ENCODE measurements at regions of chr7 and their contacts with region 1.

Region 1: GRCh38 chr7:66557608-66558143 is 71.0 kb upstream of the KCTD7 start:
- DNase-seq: peak; percentile 22
- H3K4me3 ChIP-seq: no peak overlapping the region
- H3K27ac ChIP-seq: no peak overlapping the region
- H3K4me1 ChIP-seq: no peaks in the 10 kb centered on the region
- H3K27me3 ChIP-seq: no peaks in the 10 kb centered on the region
- CTCF ChIP-seq: peak; percentile 88 to 94

Region 2: DNA sequence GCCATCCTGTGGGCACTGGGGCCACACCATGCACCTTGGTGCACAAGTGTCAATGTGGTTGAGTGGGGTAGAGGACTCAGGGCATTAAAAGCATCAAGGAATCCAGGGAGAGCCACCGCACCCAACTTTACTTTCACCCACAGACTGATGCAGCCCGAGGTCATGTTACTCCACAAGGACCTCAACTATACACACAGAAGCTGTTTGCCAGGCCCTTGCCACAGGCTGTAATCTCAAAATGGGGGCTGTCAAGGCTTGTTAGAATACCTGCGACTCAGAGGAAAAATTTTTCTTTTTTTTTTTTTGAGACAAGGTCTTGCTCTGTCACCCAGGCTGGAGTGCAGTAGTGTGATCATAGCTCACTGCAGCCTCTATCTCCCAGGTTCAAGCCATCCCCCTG is 44.5 kb after region 1 on chr7:
- CTCF ChIA-PET with region 1: no interaction called
- dilution Hi-C with region 1: no loop called
- in situ Hi-C with region 1: no loop called
- intact Hi-C with region 1: no loop called
- DNase-seq: peak; percentile 20
- H3K4me3 ChIP-seq: no peak overlapping the region
- H3K27ac ChIP-seq: no peak overlapping the region
- H3K4me1 ChIP-seq: no peaks in the 10 kb centered on the region
- H3K27me3 ChIP-seq: no peaks in the 10 kb centered on the region
- CTCF ChIP-seq: no peak

Region 3: GRCh38 chr7:66628361-66629140 is 70.9 kb after region 1 on chr7 and contains the start of gene KCTD7:
- CTCF ChIA-PET with region 1: no interaction called
- dilution Hi-C with region 1: loop called (anchors 5 kb)
- in situ Hi-C with region 1: no loop called
- intact Hi-C with region 1: no loop called
- DNase-seq: peak; percentile 99
- H3K4me3 ChIP-seq: peak within 1 kb of the TSS; percentile 72 to 85 (median 76)
- H3K27ac ChIP-seq: peak within 1 kb of the TSS; percentile 82
- H3K4me1 ChIP-seq: no peaks in the 10 kb centered on the region
- H3K27me3 ChIP-seq: no peaks in the 10 kb centered on the region
- CTCF ChIP-seq: no peak
- total RNA-seq, gene KCTD7: 3.6 to 7.3 TPM

Region 4: DNA sequence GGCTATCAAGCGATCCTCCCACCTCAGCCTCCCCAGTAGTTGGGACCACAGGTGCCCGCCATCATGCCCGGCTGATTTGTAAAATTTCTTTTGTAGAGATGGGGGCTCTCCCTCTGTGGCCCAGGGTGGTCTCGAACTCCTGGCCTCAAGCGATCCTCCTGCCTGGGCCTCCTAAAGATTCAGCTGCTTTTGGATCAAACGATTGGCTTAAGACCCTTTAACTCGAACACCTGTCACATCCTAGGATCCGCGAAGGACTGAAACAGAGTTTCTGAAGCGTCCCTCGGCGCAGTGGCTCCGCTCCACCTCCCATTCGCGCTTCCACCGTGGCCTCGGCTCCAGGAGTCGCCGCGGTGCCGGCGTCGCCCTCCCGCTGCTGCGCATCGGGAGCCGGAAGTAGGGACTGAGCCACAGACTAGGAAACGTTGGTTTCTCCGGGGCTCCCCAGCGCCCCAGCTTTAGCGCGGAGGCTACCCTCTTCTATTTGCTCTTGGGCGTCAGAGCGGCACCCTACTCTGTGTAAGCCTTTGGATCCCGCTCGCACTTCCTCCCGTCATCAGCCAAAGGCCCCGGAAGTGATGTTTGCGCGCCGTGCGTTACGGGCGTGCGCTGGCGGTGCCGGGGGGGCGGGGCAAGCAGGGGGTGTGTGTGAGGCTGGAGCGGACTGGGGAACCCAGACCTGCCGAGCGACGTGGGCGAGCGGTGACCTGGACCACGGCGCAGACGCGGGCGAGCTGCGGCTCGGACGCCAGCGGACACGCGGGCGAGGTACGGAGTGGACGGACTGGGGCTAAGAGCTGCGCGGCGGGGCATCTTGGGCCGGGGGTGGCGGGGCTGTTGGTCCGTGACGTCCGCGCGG is 124.0 kb after region 1 on chr7:
- CTCF ChIA-PET with region 1: no interaction called
- dilution Hi-C with region 1: no loop called
- in situ Hi-C with region 1: no loop called
- intact Hi-C with region 1: loop called (anchors 2 kb)
- DNase-seq: peak; percentile 95
- H3K4me3 ChIP-seq: peak overlapping the region; percentile 97 to 99 (median 98)
- H3K27ac ChIP-seq: peak overlapping the region; percentile 85
- H3K4me1 ChIP-seq: peaks cover 11% of the 10 kb centered on the region
- H3K27me3 ChIP-seq: no peaks in the 10 kb centered on the region
- CTCF ChIP-seq: no peak

Region 5: DNA sequence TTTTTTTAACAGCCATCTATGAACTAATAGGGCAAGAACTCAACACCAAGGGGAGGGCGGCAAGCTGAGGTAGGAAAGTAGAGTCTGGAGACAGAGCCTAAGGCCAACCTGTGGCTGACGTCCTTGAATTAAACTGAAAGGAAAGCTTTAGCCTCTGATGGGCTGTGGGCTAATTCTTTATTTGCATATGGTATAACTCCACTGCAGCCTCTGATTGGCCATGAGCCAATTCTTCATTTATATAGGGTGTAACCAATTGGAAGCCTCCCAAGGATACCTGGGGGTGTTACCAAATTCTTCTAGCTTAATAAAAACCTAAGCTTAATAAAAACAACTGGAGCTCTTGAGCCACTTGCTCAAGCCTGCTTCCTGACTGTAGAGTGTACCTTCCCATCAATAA is 449.3 kb after region 1 on chr7:
- CTCF ChIA-PET with region 1: no interaction called
- dilution Hi-C with region 1: no loop called
- in situ Hi-C with region 1: no loop called
- intact Hi-C with region 1: loop called (anchors 10 kb)
- DNase-seq: no peak
- H3K4me3 ChIP-seq: no peak overlapping the region
- H3K27ac ChIP-seq: no peak overlapping the region
- H3K4me1 ChIP-seq: no peaks in the 10 kb centered on the region
- H3K27me3 ChIP-seq: no peaks in the 10 kb centered on the region
- CTCF ChIP-seq: no peak

Measured in mammary epithelial cell (primary cell).